ENCODE measurements at regions of chr10 and their contacts with region 1.

Region 1: DNA sequence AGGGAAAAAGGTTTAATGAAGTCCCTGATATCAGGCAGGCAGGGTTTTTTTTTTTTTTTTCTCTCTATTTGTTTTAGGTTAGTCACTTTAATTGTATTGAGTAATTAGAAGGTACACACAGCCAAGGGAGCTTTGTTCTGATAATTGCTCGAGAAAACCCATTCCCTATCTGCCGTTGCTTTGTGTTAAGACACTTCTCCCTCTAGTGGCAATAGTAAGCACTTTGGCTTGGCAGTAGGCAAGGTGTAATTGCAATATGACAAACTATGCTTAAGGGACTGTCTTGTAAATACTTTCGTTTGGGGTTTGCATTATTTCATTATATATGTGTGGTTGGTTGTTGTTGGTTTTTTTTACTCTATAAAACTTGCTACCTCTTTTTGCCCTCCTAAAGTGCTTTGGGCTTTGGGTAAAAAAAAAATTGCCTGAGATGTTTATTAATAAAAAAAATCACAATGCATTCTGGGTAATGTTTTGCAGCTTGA is 113.4 kb downstream of the BTRC start:
- DNase-seq: peak; percentile 69
- ATAC-seq: peak; percentile 81
- H3K4me3 ChIP-seq: peak overlapping the region; percentile 27; the same call in 1 of the 2 replicates
- H3K27ac ChIP-seq: no peak overlapping the region
- H3K4me1 ChIP-seq: 0 out of 2 replicates have a peak, but pooled peaks cover 4% of the 10 kb centered on the region
- H3K27me3 ChIP-seq: no peaks in the 10 kb centered on the region
- CTCF ChIP-seq: peak; percentile 81

Region 2: DNA sequence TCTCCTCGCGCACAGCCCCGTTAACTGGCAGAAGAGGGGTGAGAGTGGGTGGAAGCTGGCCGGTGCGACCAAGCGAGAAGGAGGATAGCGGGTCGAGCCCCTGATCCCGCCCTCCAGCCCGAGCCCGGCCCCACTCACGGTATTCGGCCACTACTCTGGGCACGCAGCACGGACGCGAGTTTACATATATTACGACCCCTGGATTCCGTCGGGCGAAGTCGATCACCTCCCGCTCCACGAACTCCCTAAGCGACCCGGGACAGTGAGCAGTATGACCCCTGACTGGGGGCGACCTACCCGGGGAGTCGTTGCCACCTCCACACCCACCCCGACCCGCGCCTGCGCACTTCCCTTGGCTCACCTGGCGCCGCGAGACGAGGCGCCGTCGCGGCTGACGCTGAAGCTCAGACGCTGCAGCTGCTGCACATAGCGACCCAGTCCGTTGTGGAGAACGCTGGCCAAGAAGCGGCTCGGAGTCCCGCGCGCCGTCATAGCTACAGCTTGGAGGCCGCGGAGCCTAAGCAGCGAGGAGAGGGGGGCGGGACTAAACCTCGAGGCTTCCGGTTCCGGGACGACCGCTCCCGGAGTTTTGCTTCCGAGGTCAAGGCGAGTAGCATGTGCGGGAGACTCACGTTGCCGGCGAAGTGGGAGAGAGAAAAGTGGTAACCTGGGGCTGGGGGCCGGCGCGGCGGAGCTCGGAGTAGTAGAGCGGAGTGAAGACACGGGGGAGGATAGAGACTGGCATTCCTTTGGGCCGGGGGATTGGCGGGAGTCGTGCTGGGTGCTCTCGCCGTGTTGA is 480.2 kb before region 1 on chr10 and contains the starts of genes MRPL43 and TWNK:
- CTCF ChIA-PET with region 1: no interaction called
- POLR2A ChIA-PET with region 1: no interaction called
- intact Hi-C with region 1: no loop called
- DNase-seq: peak; percentile 72
- ATAC-seq: peak; percentile 85
- H3K4me3 ChIP-seq: peak within 1 kb of the TSS; percentile 99
- H3K27ac ChIP-seq: peak within 1 kb of the TSS; percentile 74
- H3K4me1 ChIP-seq: peaks cover 30% of the 10 kb centered on the region
- H3K27me3 ChIP-seq: no peaks in the 10 kb centered on the region
- CTCF ChIP-seq: no peak
- total RNA-seq, gene MRPL43: 81.0 and 90.5 TPM in 2 replicates
- total RNA-seq, gene TWNK: 7.5 and 8.0 TPM in 2 replicates

Region 3: GRCh38 chr10:101291331-101292193 is 175.8 kb before region 1 on chr10:
- CTCF ChIA-PET with region 1: interaction called, 12 read pairs
- POLR2A ChIA-PET with region 1: interaction called, 4 read pairs
- intact Hi-C with region 1: no loop called
- DNase-seq: peak; percentile 19
- ATAC-seq: peak; percentile 59
- H3K4me3 ChIP-seq: peak overlapping the region; percentile 69
- H3K27ac ChIP-seq: no peak overlapping the region
- H3K4me1 ChIP-seq: no peaks in the 10 kb centered on the region
- H3K27me3 ChIP-seq: no peaks in the 10 kb centered on the region
- CTCF ChIP-seq: peak; percentile 52

Region 4: GRCh38 chr10:101297901-101298486 is 169.3 kb before region 1 on chr10:
- CTCF ChIA-PET with region 1: interaction called, 4 read pairs
- POLR2A ChIA-PET with region 1: interaction called, 4 read pairs
- intact Hi-C with region 1: loop called (anchors 1 kb)
- DNase-seq: peak; percentile 57
- ATAC-seq: peak; percentile 73
- H3K4me3 ChIP-seq: no peak overlapping the region
- H3K27ac ChIP-seq: no peak overlapping the region
- H3K4me1 ChIP-seq: no peaks in the 10 kb centered on the region
- H3K27me3 ChIP-seq: no peaks in the 10 kb centered on the region
- CTCF ChIP-seq: peak; percentile 77

Region 5: DNA sequence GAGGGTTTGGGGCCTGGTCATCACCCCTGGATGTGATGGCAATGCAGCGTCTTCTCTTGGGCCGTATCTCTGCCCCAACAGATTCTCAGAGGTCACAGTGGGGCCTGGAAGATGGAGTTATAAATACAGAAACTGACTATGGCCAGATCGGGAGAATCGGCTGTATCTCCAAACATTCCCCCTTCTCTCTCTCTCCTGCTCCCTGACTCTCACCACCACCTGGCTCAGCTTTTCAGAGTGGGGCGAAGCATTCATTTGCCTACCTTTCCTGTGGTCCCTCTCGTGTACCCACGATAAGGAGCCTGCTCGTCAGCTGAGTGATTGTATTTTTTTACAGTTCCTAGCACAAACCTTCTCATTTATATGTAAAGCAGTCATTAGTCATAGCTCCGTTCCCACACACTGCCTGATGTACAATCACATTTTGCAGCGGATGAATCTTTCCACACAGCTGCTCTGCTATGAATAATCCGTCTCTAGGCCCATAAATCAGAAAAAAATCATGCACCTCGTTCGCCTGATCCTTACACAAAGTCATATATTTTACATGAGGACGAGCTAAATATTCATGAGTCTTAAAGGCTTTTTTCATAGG is 136.6 kb before region 1 on chr10:
- CTCF ChIA-PET with region 1: interaction called, 10 read pairs
- POLR2A ChIA-PET with region 1: no interaction called
- intact Hi-C with region 1: no loop called
- DNase-seq: no peak
- ATAC-seq: no peak
- H3K4me3 ChIP-seq: no peak overlapping the region
- H3K27ac ChIP-seq: no peak overlapping the region
- H3K4me1 ChIP-seq: no peaks in the 10 kb centered on the region; the same call in 1 of the 2 replicates
- H3K27me3 ChIP-seq: no peaks in the 10 kb centered on the region
- CTCF ChIP-seq: no peak

Region 6: GRCh38 chr10:101545898-101546297 is 78.6 kb after region 1 on chr10:
- CTCF ChIA-PET with region 1: interaction called, 10 read pairs
- POLR2A ChIA-PET with region 1: no interaction called
- intact Hi-C with region 1: no loop called
- DNase-seq: no peak
- ATAC-seq: no peak
- H3K4me3 ChIP-seq: no peak overlapping the region
- H3K27ac ChIP-seq: no peak overlapping the region
- H3K4me1 ChIP-seq: no peaks in the 10 kb centered on the region
- H3K27me3 ChIP-seq: no peaks in the 10 kb centered on the region
- CTCF ChIP-seq: no peak

Region 7: GRCh38 chr10:101569838-101570766 is 102.8 kb after region 1 on chr10:
- CTCF ChIA-PET with region 1: interaction called, 11 read pairs
- POLR2A ChIA-PET with region 1: no interaction called
- intact Hi-C with region 1: no loop called
- DNase-seq: peak; percentile 59
- ATAC-seq: peak; percentile 66
- H3K4me3 ChIP-seq: peak overlapping the region; percentile 82
- H3K27ac ChIP-seq: no peak overlapping the region
- H3K4me1 ChIP-seq: peaks cover 11% of the 10 kb centered on the region; the same call in 1 of the 2 replicates
- H3K27me3 ChIP-seq: no peaks in the 10 kb centered on the region
- CTCF ChIP-seq: peak; percentile 57

Region 8: GRCh38 chr10:101602761-101603398 is 135.6 kb after region 1 on chr10:
- CTCF ChIA-PET with region 1: no interaction called
- POLR2A ChIA-PET with region 1: no interaction called
- intact Hi-C with region 1: no loop called
- DNase-seq: peak; percentile 76
- ATAC-seq: peak; percentile 91
- H3K4me3 ChIP-seq: no peak overlapping the region
- H3K27ac ChIP-seq: no peak overlapping the region
- H3K4me1 ChIP-seq: no peaks in the 10 kb centered on the region
- H3K27me3 ChIP-seq: no peaks in the 10 kb centered on the region
- CTCF ChIP-seq: peak; percentile 89